GM10248 (cell line): ENCODE measurements at regions of chr18 and their contacts with region 1.

Region 1: GRCh38 chr18:37778417-37779165 is 213.0 kb upstream of the CELF4 start:
- DNase-seq: peak; percentile 71
- CTCF ChIP-seq: peak; percentile 91

Region 2: DNA sequence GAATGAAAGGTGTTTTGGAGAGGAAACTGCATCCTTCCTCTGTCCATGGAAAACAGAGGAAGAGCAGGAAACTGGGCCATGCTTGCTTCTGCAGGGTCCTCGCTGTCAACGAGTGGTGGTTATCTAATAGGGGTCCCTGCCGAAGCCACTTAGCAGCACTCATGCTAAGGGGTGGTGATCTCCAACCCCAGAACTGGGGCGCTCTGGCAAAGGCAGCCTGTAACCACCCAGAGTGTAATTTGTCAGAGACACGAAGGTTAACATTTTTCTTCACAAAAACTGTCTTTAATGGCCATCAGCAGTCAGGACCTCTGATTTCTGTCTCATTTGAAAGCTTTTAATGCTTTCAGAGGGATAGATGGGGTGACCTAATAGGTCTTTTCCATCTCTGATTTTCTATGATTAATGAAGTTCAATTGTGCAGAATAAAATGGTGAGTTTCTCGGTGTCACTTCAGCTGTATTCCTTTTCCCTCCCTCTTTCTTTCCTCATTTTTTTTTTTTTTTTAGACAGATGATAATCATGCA is 18.3 kb after region 1 on chr18:
- CTCF ChIA-PET with region 1: interaction called, 13 read pairs
- POLR2A ChIA-PET with region 1: no interaction called
- DNase-seq: no peak
- CTCF ChIP-seq: no peak